Calu3 (cell line): ENCODE measurements at regions of chr6 and their contacts with region 1.

Region 1: DNA sequence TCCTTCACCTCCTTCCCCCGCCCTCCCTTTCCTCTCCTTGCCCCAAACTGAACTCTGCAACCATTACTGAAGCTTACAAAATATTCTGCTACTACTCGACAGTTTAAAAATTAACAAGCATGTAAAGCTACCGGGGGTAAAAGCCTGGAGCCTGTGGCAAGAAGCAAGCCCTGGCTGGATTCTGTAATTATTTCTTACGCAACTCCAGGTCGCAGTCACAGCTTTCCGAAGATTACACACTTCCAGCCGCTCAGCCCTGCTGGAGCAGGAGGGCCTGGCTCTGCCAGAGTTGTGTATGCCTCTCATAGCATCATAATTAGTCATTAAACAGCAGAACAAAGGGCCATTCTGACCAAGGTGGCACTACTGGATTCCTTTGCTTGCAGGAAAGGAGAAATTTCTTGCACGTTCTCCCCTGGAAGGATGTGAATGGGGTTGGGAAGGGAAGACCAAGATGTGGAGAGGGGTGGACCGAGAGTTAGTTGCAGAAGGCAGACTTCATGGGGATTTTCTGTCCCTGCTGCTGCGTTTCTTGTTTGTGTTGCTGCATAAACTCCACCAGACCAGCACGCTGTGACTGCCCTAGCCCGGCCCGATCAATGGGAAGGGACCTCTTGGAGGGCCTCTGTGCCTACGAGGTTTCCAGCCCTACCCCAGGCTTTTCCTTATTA is 23.6 kb downstream of the FOXQ1 start:
- DNase-seq: peak; percentile 82
- H3K4me3 Mint-ChIP-seq: no peak overlapping the region
- H3K27ac Mint-ChIP-seq: peak overlapping the region; percentile 98
- H3K4me1 Mint-ChIP-seq: peaks cover 21% of the 10 kb centered on the region
- H3K27me3 Mint-ChIP-seq: no peaks in the 10 kb centered on the region
- CTCF ChIP-seq: no peak

Region 2: DNA sequence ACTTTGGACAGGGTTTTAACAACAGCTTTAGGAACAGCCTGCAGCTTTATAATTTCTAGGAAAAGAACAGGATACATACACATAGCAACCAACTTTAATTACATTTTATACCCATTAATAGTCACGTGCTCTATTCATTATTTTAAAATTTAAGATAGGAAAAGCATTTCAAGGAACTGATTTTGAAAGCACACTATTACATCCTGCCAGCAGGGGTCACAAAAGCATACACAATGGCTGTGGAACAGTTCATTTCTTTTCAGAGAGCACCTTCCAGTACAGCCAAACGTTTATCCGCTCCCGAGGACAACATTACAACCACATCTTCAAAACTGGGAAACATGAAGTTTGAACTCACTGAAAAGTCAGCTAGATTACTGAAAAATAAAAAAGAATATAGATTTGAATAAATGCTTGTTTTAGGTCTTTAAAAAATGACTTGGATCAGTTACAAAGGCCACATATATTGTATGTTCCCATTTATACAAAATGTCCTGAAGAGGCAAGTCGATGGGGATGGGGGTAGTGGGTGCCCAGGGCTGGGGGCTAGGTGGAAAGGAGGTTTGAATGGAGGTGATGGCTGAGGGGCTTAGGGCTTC is 537.9 kb before region 1 on chr6:
- CTCF ChIA-PET with region 1: no interaction called
- intact Hi-C with region 1: loop called (anchors 1 kb)
- DNase-seq: peak; percentile 57
- H3K4me3 Mint-ChIP-seq: no peak overlapping the region
- H3K27ac Mint-ChIP-seq: no peak overlapping the region
- H3K4me1 Mint-ChIP-seq: no peaks in the 10 kb centered on the region
- H3K27me3 Mint-ChIP-seq: no peaks in the 10 kb centered on the region
- CTCF ChIP-seq: peak; percentile 30

Region 3: DNA sequence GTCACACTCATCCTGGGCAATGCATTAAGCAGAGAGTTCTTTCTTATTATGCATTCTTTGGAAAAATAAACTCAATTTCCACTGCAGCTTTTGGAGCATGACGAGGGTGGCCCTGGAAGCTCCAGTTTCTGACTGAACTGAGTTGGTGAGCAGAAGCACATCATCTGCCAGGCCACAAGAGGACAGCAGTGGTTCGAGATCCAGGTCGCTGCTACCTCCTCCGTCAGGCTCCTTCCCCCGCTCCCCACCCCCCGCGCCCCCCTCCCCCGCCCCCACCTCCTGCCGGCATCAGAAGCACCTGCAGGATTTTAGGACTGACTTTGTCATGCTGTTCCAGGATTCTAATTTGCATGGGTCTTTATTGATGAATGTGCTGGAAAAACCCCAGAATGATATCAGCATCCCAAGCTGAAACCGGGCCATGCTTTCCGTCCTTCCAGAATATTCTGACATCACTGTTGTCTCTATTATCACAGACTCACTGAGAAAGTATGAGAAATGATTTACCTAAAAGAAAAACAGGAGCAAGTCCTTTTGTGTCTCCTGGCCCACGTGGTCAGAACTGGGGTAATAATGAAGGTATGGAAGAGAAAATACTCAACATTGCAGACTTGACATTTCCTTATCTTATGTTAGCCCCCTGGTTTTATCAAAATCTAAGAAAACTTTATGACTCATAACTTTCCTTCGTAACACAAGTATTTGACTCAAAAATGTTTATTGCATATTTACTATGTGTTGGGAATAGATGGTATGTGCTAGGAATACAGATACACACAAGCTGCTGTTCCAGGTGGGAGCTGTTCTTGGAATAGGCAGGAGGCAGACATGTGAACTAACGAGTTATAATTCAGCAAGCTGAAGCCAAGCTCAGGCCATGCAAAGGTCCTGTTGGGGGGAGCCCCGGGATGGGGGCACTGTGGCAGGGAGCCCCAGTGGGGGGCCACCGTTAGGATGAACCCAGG is 422.3 kb before region 1 on chr6:
- CTCF ChIA-PET with region 1: interaction called, 6 read pairs
- intact Hi-C with region 1: loop called (anchors 1 kb)
- DNase-seq: peak; percentile 58
- H3K4me3 Mint-ChIP-seq: no peak overlapping the region
- H3K27ac Mint-ChIP-seq: no peak overlapping the region
- H3K4me1 Mint-ChIP-seq: peaks cover 7% of the 10 kb centered on the region
- H3K27me3 Mint-ChIP-seq: no peaks in the 10 kb centered on the region
- CTCF ChIP-seq: peak; percentile 48

Region 4: GRCh38 chr6:968791-969190 is 366.7 kb before region 1 on chr6:
- CTCF ChIA-PET with region 1: no interaction called
- intact Hi-C with region 1: no loop called
- DNase-seq: no peak
- H3K4me3 Mint-ChIP-seq: no peak overlapping the region
- H3K27ac Mint-ChIP-seq: no peak overlapping the region
- H3K4me1 Mint-ChIP-seq: no peaks in the 10 kb centered on the region
- H3K27me3 Mint-ChIP-seq: no peaks in the 10 kb centered on the region
- CTCF ChIP-seq: no peak

Region 5: GRCh38 chr6:1039191-1039590 is 296.3 kb before region 1 on chr6:
- CTCF ChIA-PET with region 1: no interaction called
- intact Hi-C with region 1: no loop called
- DNase-seq: peak; percentile 69
- H3K4me3 Mint-ChIP-seq: peak overlapping the region; percentile 33
- H3K27ac Mint-ChIP-seq: peak overlapping the region; percentile 55
- H3K4me1 Mint-ChIP-seq: peaks cover 31% of the 10 kb centered on the region
- H3K27me3 Mint-ChIP-seq: no peaks in the 10 kb centered on the region
- CTCF ChIP-seq: no peak

Region 6: DNA sequence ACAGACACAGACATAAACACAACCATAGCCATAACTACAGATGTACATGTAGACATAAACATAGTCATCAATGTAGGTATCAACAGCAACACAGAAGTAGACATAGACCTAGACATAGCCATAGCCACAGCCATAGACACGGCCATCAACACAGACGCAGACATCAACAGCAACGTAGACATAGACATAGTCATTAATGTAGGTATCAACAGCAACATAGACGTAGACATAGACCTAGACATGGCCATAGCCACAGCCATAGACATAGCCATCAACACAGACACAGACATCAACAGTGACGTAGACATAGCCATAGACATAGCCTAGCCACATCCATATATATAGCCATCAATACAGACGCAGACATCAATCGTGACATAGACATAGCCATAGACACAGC is 281.9 kb before region 1 on chr6:
- CTCF ChIA-PET with region 1: no interaction called
- intact Hi-C with region 1: loop called (anchors 10 kb)
- DNase-seq: no peak
- H3K4me3 Mint-ChIP-seq: no peak overlapping the region
- H3K27ac Mint-ChIP-seq: no peak overlapping the region
- H3K4me1 Mint-ChIP-seq: peaks cover 14% of the 10 kb centered on the region
- H3K27me3 Mint-ChIP-seq: no peaks in the 10 kb centered on the region
- CTCF ChIP-seq: no peak

Region 7: GRCh38 chr6:1286972-1287610 is 48.4 kb before region 1 on chr6:
- CTCF ChIA-PET with region 1: interaction called, 3 read pairs
- intact Hi-C with region 1: loop called (anchors 1 kb)
- DNase-seq: peak; percentile 76
- H3K4me3 Mint-ChIP-seq: no peak overlapping the region
- H3K27ac Mint-ChIP-seq: peak overlapping the region; percentile 95
- H3K4me1 Mint-ChIP-seq: peaks cover 25% of the 10 kb centered on the region
- H3K27me3 Mint-ChIP-seq: no peaks in the 10 kb centered on the region
- CTCF ChIP-seq: no peak

Region 8: DNA sequence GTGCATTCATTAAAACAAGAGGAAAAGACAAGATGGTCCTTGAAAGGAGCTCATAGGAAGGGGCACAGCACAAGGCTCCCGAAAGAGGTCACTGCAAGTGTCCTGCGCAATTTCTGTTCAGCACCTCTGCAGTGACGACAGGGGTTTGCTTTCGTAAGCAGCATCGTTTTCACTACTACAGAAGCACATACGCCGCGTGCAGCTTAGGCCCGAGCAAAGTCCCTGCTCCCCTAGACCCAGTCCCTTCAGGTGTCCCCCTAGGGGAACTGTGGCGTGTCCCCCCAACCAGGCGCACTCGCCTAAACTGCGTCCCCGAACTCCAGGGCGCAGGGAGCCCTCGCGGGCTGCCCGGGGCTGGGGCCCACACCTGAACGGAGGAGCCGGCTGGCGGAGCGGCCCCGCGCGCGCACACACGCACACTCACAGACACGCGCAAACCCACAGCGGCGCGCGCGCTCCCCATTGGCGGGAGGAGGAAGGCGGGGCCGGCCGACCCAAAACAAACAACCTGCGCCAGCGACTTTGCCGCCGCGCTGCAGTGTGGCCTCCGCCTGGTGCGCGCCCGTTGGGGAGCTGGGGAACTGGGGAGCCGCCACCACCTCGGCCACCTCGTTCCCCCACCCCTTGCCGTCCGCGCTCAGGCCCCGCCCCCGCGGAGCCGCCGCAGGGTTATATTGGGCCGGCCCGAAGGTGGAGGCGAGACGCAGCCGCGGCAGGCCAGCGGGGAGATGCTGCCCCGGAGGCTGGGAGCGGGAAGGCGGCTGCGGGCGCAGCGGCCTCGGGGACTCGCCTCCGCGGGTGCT is 23.9 kb before region 1 on chr6 and contains the start of gene FOXQ1:
- CTCF ChIA-PET with region 1: interaction called, 17 read pairs
- intact Hi-C with region 1: loop called (anchors 2 kb)
- DNase-seq: peak; percentile 94
- H3K4me3 Mint-ChIP-seq: peak within 1 kb of the TSS; percentile 76
- H3K27ac Mint-ChIP-seq: peak within 1 kb of the TSS; percentile 82
- H3K4me1 Mint-ChIP-seq: peaks cover 31% of the 10 kb centered on the region
- H3K27me3 Mint-ChIP-seq: no peaks in the 10 kb centered on the region
- CTCF ChIP-seq: no peak
- total RNA-seq, gene FOXQ1: 46.1 and 51.0 TPM in 2 replicates